Endothelial cell of umbilical vein (primary cell): ENCODE measurements at regions of chr14 and their contacts with region 1.

Region 1: DNA sequence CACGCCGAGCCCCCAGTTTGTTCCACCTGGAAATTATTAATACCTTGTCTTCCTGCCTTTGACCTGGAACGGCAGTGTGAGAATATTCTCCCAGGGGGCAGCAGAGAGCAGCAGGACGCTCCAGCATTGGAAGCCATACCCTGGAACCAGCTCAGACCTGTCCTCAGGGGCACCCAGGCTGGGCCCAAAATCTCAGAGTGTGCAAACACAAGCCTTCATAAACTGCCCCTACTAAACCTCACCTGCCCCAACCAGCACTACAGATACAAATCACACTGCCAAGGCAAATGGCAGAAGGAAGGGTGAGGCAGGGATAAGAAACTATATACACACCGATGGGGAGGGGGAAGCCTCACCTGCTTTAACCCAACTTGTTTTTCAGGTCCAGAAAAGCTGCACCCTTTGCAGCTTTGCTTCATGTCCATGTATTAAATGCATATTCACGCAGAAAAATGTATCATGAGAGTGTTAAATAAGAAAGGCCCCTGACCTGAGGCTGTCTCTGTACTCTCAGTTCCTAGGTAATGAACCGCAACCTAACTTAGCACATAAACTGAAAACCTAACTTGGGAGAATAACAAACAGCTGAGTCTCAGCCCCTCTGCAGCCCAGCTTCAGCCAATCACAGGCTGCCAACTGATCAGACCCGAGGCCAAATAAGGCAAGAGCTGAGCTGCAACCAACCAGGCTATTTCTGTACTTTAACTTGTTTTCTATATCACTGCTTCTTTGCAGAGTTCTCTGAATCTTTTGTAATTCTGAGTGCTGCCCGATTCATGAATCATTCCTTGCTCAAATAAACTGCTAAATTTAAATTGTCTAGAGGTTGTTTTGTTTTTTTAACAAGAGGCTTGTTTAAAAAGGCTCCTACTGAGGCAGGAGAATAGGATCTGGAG is 130.1 kb downstream of the SPTSSA start:
- DNase-seq: peak; percentile 51
- H3K4me3 ChIP-seq: no peak overlapping the region
- H3K27ac ChIP-seq: no peak overlapping the region
- H3K4me1 ChIP-seq: no peaks in the 10 kb centered on the region
- H3K27me3 ChIP-seq: peaks cover 0 to 2% of the 10 kb centered on the region in 2 experiments
- CTCF ChIP-seq: peak; percentile 76 to 80
- POLR2A ChIP-seq: no peak

Region 2: DNA sequence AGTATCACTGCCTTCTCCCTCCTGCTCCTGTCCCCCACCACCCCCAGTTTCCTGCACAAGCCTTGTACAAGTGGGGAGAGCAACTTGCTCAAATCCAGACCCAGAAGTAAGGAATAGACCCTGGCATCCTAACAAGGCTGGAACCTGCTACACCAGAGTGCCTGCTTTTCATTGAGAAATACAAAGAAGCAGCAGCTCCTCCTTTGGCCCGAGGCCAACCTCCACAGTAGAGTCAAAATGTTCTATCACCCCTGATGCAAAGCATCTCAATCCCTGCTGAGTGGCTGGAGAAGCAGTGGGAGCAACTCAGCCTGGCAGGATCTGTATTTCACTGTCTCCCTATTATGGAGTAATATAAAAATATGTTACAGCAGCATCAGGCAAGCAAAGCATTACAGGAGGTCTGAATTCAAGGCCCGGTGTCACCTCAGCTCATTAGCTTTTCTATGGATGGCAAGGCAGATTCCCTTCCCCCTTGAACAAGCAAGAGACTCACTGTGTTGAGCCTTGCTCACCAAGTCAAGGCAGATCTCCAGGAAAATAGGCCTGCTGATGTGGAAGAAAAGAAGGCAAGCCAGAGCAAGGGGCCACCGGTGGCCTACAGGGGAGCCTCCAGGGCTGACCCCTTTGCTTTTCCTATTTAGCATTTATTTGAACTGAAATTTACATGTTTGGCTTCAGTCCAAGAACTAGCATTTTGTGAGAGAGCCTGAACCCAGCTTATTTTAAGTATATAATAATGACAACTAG is 194.8 kb before region 1 on chr14:
- CTCF ChIA-PET with region 1: no interaction called
- POLR2A ChIA-PET with region 1: no interaction called
- dilution Hi-C with region 1: no loop called
- intact Hi-C with region 1: no loop called
- DNase-seq: no peak
- H3K4me3 ChIP-seq: no peak overlapping the region
- H3K27ac ChIP-seq: no peak overlapping the region
- H3K4me1 ChIP-seq: no peaks in the 10 kb centered on the region
- H3K27me3 ChIP-seq: no peaks in the 10 kb centered on the region
- CTCF ChIP-seq: no peak
- POLR2A ChIP-seq: no peak

Region 3: DNA sequence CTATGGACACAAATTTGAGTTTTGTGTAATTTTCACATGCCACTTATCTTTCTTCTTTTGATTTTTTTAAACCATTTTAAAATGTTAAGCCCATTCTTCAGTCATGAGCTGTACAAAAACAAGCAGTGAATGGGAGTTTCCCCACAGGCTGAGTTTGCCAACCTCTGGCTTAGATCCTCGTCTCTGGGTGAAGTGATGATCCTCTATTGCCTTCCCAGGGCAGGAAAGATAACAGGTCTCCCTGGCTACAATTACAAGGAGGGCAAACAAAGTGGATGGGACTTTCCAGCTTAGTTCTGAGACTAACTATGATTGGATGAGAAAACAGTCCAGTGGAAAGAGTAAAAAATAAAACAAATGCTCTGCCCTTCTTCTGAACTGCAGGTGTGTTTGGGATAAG is 73.7 kb before region 1 on chr14:
- CTCF ChIA-PET with region 1: no interaction called
- POLR2A ChIA-PET with region 1: no interaction called
- dilution Hi-C with region 1: no loop called
- intact Hi-C with region 1: no loop called
- DNase-seq: no peak
- H3K4me3 ChIP-seq: no peak overlapping the region
- H3K27ac ChIP-seq: no peak overlapping the region
- H3K4me1 ChIP-seq: no peaks in the 10 kb centered on the region
- H3K27me3 ChIP-seq: peaks cover 0 to 2% of the 10 kb centered on the region in 2 experiments
- CTCF ChIP-seq: no peak
- POLR2A ChIP-seq: no peak

Region 4: GRCh38 chr14:34344318-34344717 is 12.3 kb after region 1 on chr14:
- CTCF ChIA-PET with region 1: interaction called, 15 read pairs
- POLR2A ChIA-PET with region 1: no interaction called
- dilution Hi-C with region 1: no loop called
- intact Hi-C with region 1: no loop called
- DNase-seq: no peak
- H3K4me3 ChIP-seq: no peak overlapping the region
- H3K27ac ChIP-seq: no peak overlapping the region
- H3K4me1 ChIP-seq: no peaks in the 10 kb centered on the region
- H3K27me3 ChIP-seq: no peaks in the 10 kb centered on the region
- CTCF ChIP-seq: no peak
- POLR2A ChIP-seq: no peak

Region 5: GRCh38 chr14:34496679-34497513 is 164.9 kb after region 1 on chr14:
- CTCF ChIA-PET with region 1: interaction called, 27 read pairs
- POLR2A ChIA-PET with region 1: no interaction called
- dilution Hi-C with region 1: no loop called
- intact Hi-C with region 1: loop called (anchors 1 kb)
- DNase-seq: peak; percentile 64
- H3K4me3 ChIP-seq: no peak overlapping the region
- H3K27ac ChIP-seq: peak overlapping the region; percentile 34
- H3K4me1 ChIP-seq: peaks cover 10% of the 10 kb centered on the region
- H3K27me3 ChIP-seq: no peaks in the 10 kb centered on the region
- CTCF ChIP-seq: no peak
- POLR2A ChIP-seq: no peak

Region 6: GRCh38 chr14:34539407-34540180 is 207.6 kb after region 1 on chr14 and contains the start of gene EAPP:
- CTCF ChIA-PET with region 1: interaction called, 6 read pairs
- POLR2A ChIA-PET with region 1: no interaction called
- dilution Hi-C with region 1: no loop called
- intact Hi-C with region 1: loop called (anchors 5 kb)
- DNase-seq: peak; percentile 96
- H3K4me3 ChIP-seq: peak within 1 kb of the TSS; percentile 58 to 85 (median 80)
- H3K27ac ChIP-seq: peak within 1 kb of the TSS; percentile 89
- H3K4me1 ChIP-seq: peaks cover 5% of the 10 kb centered on the region
- H3K27me3 ChIP-seq: no peaks in the 10 kb centered on the region
- CTCF ChIP-seq: no peak
- POLR2A ChIP-seq: peak; percentile 87
- total RNA-seq, gene EAPP: 22.2 and 24.3 TPM in 2 replicates

Region 7: GRCh38 chr14:34554540-34555333 is 222.8 kb after region 1 on chr14:
- CTCF ChIA-PET with region 1: interaction called, 3 read pairs
- POLR2A ChIA-PET with region 1: no interaction called
- dilution Hi-C with region 1: no loop called
- intact Hi-C with region 1: loop called (anchors 5 kb)
- DNase-seq: no peak
- H3K4me3 ChIP-seq: no peak overlapping the region
- H3K27ac ChIP-seq: no peak overlapping the region
- H3K4me1 ChIP-seq: peaks cover 5% of the 10 kb centered on the region
- H3K27me3 ChIP-seq: no peaks in the 10 kb centered on the region
- CTCF ChIP-seq: no peak
- POLR2A ChIP-seq: no peak